ENCODE measurements at regions of chr22 and their contacts with region 1.

Region 1: DNA sequence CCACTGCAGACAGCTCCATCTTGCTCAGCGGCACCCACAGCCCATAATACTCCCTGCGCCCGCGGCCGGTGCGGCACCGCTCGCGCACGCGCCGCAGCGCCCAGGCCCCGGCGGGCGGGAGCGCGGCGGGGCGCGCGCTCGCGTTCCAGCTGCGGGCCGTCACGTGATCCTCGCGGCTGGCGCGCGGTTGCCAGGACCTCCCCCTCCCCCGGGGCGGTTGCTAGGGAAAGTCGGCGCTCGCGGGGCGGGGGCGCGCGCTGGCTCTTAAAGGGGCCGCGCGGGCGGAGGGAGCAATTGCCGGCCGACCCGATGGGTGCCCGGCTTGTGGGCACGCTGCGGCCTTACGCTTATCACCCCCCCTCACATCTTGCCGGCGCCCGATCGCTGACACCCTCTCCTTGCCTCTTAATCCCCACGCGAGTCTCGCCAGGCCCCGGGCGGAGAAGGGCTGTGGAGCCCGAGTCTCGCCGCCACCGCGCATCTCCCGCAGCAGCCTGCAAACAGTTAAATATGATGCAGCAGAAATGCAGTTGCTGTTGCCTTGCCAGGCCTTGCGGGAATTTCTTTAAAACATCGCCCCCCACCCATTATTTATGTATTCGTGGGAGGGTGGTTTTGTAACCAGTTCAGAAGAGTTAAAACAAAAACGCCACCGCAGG is at the start of gene CBX6:
- DNase-seq: peak; percentile 92 to 95 (median 93)
- H3K4me3 ChIP-seq: peak within 1 kb of the TSS; percentile 95
- H3K4me3 Mint-ChIP-seq: peak within 1 kb of the TSS; percentile 84 to 95 (median 92)
- H3K27ac ChIP-seq: peak within 1 kb of the TSS; percentile 64
- H3K27ac Mint-ChIP-seq: peak within 1 kb of the TSS; percentile 85 to 99 (median 90)
- H3K4me1 ChIP-seq: peaks cover 44% of the 10 kb centered on the region
- H3K4me1 Mint-ChIP-seq: peaks cover 41 to 60% (median 50%) of the 10 kb centered on the region in 3 donors
- H3K27me3 ChIP-seq: no peaks in the 10 kb centered on the region
- H3K27me3 Mint-ChIP-seq: peaks cover 0 to 4% of the 10 kb centered on the region in 2 donors
- total RNA-seq, gene CBX6: 159 to 171 TPM

Region 2: GRCh38 chr22:38766076-38766777 is 106.1 kb before region 1 on chr22:
- CTCF ChIA-PET with region 1: interaction called, 11 read pairs
- POLR2A ChIA-PET with region 1: no interaction called
- DNase-seq: peak; percentile 19 to 69 (median 41)
- H3K4me3 ChIP-seq: no peak overlapping the region
- H3K4me3 Mint-ChIP-seq: no peak overlapping the region
- H3K27ac ChIP-seq: no peak overlapping the region
- H3K27ac Mint-ChIP-seq: no peak overlapping the region
- H3K4me1 ChIP-seq: peaks cover 9% of the 10 kb centered on the region
- H3K4me1 Mint-ChIP-seq: peaks cover 4 to 14% (median 6%) of the 10 kb centered on the region in 3 donors
- H3K27me3 ChIP-seq: no peaks in the 10 kb centered on the region
- H3K27me3 Mint-ChIP-seq: peaks cover 0 to under 1% of the 10 kb centered on the region in 2 donors

Region 3: DNA sequence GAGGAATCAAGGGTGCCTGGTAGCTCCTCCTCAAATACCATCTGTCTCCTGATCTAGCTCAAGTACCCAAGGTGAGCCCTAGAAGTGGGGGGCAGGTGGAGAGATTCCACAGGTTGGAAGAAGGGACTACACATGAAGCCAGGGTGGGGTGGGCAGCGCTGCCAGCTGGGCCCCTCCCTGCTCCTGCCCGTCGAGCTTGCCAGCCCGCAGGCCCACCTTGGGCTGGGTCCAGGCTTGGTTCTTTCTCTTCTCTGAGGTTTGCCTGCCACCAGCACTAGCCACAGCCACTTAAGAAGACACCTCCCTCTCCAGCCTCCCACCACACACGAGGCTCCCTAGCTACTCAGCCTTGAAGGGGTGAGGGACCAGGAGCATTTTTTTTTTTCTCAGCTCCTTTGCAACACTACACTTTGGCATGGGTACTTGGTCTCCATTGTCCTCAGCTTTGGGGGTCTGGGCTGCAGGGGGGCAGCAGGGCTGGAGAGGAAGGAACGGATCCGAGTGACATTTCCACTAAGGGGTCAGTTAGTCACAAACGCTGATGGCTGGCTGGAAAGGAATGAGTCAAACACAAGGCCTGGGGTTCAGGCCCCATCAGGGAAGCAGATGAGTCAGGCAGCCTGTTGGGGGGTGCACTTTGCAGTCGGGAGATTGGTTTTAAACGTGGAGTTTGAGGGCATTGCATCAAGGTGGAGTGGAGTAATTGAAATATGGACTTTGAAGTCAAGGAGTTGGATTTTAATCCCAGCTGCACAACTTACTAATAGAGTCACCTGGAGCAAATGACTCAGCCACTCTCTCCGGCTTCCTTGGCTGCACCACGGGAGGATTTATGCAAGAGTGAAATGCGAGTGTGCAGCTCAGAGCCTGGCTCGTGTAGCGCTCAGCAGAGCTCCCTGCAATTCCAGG is 21.1 kb before region 1 on chr22:
- CTCF ChIA-PET with region 1: interaction called, 24 read pairs
- POLR2A ChIA-PET with region 1: no interaction called
- DNase-seq: peak in 1 of 5 donors; percentile 9
- H3K4me3 ChIP-seq: no peak overlapping the region
- H3K4me3 Mint-ChIP-seq: no peak overlapping the region
- H3K27ac ChIP-seq: no peak overlapping the region
- H3K27ac Mint-ChIP-seq: no peak overlapping the region
- H3K4me1 ChIP-seq: no peaks in the 10 kb centered on the region
- H3K4me1 Mint-ChIP-seq: no peaks in the 10 kb centered on the region
- H3K27me3 ChIP-seq: no peaks in the 10 kb centered on the region
- H3K27me3 Mint-ChIP-seq: peaks cover 2 to 8% of the 10 kb centered on the region in 2 donors

Region 4: GRCh38 chr22:38919631-38920190 is 47.4 kb after region 1 on chr22:
- CTCF ChIA-PET with region 1: interaction called, 11 read pairs
- POLR2A ChIA-PET with region 1: no interaction called
- DNase-seq: no peak
- H3K4me3 ChIP-seq: no peak overlapping the region
- H3K4me3 Mint-ChIP-seq: no peak overlapping the region
- H3K27ac ChIP-seq: no peak overlapping the region
- H3K27ac Mint-ChIP-seq: no peak overlapping the region
- H3K4me1 ChIP-seq: no peaks in the 10 kb centered on the region
- H3K4me1 Mint-ChIP-seq: no peaks in the 10 kb centered on the region
- H3K27me3 ChIP-seq: no peaks in the 10 kb centered on the region
- H3K27me3 Mint-ChIP-seq: peaks cover 8 to 21% of the 10 kb centered on the region in 2 donors

Region 5: GRCh38 chr22:38957046-38957759 is 84.9 kb after region 1 on chr22 and contains the start of gene APOBEC3A:
- CTCF ChIA-PET with region 1: no interaction called
- POLR2A ChIA-PET with region 1: no interaction called
- DNase-seq: peak in 1 of 5 donors; percentile 33
- H3K4me3 ChIP-seq: no peak within 1 kb of the TSS
- H3K4me3 Mint-ChIP-seq: no peak within 1 kb of the TSS
- H3K27ac ChIP-seq: no peak within 1 kb of the TSS
- H3K27ac Mint-ChIP-seq: peak within 1 kb of the TSS in 1 of 8 donors; percentile 47
- H3K4me1 ChIP-seq: no peaks in the 10 kb centered on the region
- H3K4me1 Mint-ChIP-seq: peaks cover 0 to 5% (median 5%) of the 10 kb centered on the region in 3 donors
- H3K27me3 ChIP-seq: no peaks in the 10 kb centered on the region
- H3K27me3 Mint-ChIP-seq: no peaks in the 10 kb centered on the region
- total RNA-seq, gene APOBEC3A: not detected

Region 6: GRCh38 chr22:39003165-39003638 is 130.9 kb after region 1 on chr22:
- CTCF ChIA-PET with region 1: interaction called, 114 read pairs
- POLR2A ChIA-PET with region 1: interaction called, 3 read pairs
- DNase-seq: peak; percentile 61 to 85 (median 68)
- H3K4me3 ChIP-seq: no peak overlapping the region
- H3K4me3 Mint-ChIP-seq: peak overlapping the region in 1 of 7 donors; percentile 6
- H3K27ac ChIP-seq: no peak overlapping the region
- H3K27ac Mint-ChIP-seq: peak overlapping the region in 7 of 8 donors; percentile 19 to 78 (median 66)
- H3K4me1 ChIP-seq: peaks cover 15% of the 10 kb centered on the region
- H3K4me1 Mint-ChIP-seq: peaks cover 10 to 15% (median 15%) of the 10 kb centered on the region in 3 donors
- H3K27me3 ChIP-seq: no peaks in the 10 kb centered on the region
- H3K27me3 Mint-ChIP-seq: peaks cover 4% of the 10 kb centered on the region in 2 donors